PC-3 (cell line): ENCODE measurements at regions of chr14 and their contacts with region 1.

Region 1: GRCh38 chr14:51828017-51828797 is 32.2 kb upstream of the GNG2 start:
- DNase-seq: peak; percentile 94
- ATAC-seq: peak; percentile 98
- H3K4me3 ChIP-seq: peak overlapping the region; percentile 54; the same call in 1 of the 2 replicates
- H3K27ac ChIP-seq: peak overlapping the region; percentile 95
- H3K4me1 ChIP-seq: peaks cover 31% of the 10 kb centered on the region
- H3K27me3 ChIP-seq: no peaks in the 10 kb centered on the region
- CTCF ChIP-seq: peak; percentile 22; the same call in 1 of the 2 replicates

Region 2: GRCh38 chr14:51860164-51860824 is 32.1 kb after region 1 on chr14 and contains the start of gene GNG2:
- CTCF ChIA-PET with region 1: interaction called, 12 read pairs
- POLR2A ChIA-PET with region 1: interaction called, 11 read pairs
- intact Hi-C with region 1: no loop called
- DNase-seq: peak; percentile 73
- ATAC-seq: peak; percentile 100
- H3K4me3 ChIP-seq: peak within 1 kb of the TSS; percentile 75
- H3K27ac ChIP-seq: peak within 1 kb of the TSS; percentile 36
- H3K4me1 ChIP-seq: peaks cover 28% of the 10 kb centered on the region
- H3K27me3 ChIP-seq: no peaks in the 10 kb centered on the region
- CTCF ChIP-seq: no peak
- total RNA-seq, gene GNG2: 6.8 and 9.3 TPM in 2 replicates

Region 3: GRCh38 chr14:51901475-51902024 is 73.3 kb after region 1 on chr14:
- CTCF ChIA-PET with region 1: interaction called, 3 read pairs
- POLR2A ChIA-PET with region 1: no interaction called
- intact Hi-C with region 1: loop called (anchors 1 kb)
- DNase-seq: no peak
- ATAC-seq: no peak
- H3K4me3 ChIP-seq: no peak overlapping the region
- H3K27ac ChIP-seq: no peak overlapping the region
- H3K4me1 ChIP-seq: peaks cover 5% of the 10 kb centered on the region
- H3K27me3 ChIP-seq: no peaks in the 10 kb centered on the region
- CTCF ChIP-seq: no peak

Region 4: DNA sequence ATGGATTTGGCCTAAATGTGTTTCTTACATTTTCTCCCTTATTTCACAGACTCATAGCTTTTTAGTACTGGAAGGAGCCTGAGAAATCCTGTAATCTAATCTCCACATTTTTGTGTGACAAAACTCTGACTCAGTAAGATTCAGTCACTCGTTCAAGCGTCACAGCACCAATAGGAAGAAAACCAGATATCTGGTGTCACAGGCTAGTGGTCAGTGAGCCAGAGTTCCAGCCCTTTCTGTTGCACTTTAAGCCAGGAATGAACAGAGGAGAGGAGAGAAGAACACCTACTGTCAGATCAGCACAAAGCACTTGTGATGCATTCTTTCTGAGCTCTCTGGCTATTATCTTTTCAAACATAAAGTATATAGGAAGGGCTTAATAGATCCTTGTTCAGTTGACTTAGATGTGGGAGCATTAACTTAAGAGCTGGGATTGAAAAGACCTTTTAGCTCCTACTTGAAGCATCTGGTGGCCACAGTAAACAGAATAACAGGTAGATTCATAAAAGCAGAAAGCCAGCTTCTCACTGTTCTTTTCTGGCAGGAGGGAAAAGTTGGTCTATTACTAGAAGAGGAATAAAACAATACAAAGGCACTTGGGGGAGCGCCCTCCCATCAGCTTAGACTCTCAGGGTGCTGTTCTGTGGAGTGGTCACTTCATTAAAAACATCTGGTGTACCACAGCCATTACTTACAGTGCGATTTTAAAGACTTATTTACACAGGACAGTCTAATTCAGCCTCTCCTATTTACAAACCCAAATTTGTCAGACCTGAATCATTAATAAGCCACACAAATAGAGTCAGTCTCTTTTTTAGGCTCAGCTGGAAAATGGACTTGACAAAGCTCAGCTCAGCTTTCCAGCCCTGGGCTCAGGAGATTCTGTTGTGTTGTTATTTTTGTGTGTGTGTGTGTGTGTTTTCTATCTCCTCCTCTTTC is 252.9 kb after region 1 on chr14:
- CTCF ChIA-PET with region 1: no interaction called
- POLR2A ChIA-PET with region 1: no interaction called
- intact Hi-C with region 1: loop called (anchors 1 kb)
- DNase-seq: peak; percentile 96
- ATAC-seq: peak; percentile 70
- H3K4me3 ChIP-seq: peak overlapping the region; percentile 51
- H3K27ac ChIP-seq: peak overlapping the region; percentile 97
- H3K4me1 ChIP-seq: peaks cover 61% of the 10 kb centered on the region
- H3K27me3 ChIP-seq: no peaks in the 10 kb centered on the region
- CTCF ChIP-seq: no peak

Region 5: DNA sequence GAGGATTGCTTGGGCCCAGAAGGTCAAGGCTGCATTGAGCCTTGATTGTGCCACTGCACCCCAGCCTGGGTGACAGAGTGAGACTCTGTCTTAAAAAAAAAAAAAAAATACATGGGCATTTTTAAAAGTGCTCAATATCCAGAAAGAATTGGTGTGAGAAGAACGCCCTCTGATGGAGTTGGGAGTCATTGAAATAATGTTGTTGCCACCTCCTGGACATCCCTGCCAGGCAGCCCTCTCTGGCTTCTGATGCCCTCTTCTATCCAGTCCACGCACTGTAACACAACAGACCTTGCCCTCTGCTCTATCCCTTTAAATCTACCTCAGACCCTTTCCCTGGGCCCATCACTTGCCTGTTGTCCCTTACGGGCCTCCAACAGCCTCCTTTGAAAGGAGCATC is 444.2 kb after region 1 on chr14:
- CTCF ChIA-PET with region 1: no interaction called
- POLR2A ChIA-PET with region 1: no interaction called
- intact Hi-C with region 1: loop called (anchors 10 kb)
- DNase-seq: peak; percentile 80
- ATAC-seq: peak; percentile 85
- H3K4me3 ChIP-seq: no peak overlapping the region
- H3K27ac ChIP-seq: no peak overlapping the region
- H3K4me1 ChIP-seq: no peaks in the 10 kb centered on the region; the same call in 1 of the 2 replicates
- H3K27me3 ChIP-seq: peaks cover 23% of the 10 kb centered on the region
- CTCF ChIP-seq: peak; percentile 75